ENCODE measurements at regions of chrX and their contacts with region 1.

Region 1: DNA sequence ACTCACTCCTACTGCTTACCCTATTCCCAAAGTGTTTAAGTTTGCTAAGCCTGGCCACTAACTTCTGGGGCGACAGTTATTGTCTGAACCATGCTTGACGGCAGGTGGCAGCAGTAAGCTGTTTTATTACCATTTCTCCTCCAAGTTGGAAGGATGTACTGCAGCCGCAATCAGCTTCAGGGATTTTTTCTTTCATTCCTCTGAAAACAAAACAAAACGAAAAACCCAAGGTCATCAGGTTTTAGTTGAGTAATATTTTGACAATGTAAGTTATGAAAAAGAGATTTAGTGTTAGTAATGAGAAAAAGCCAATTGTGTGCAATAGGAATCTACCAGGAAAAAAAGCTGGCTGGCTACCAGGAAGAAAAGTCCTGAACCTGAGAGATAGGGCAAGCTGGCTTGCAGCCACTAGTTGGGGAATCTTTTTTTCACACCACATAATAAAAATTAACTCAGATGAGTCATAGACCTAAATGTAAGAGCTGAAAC is 13.2 kb upstream of the RAB9B start:
- DNase-seq: peak; percentile 69
- ATAC-seq: peak; percentile 94
- H3K4me3 Mint-ChIP-seq: no peak overlapping the region
- H3K27ac Mint-ChIP-seq: no peak overlapping the region
- H3K4me1 Mint-ChIP-seq: no peaks in the 10 kb centered on the region; the same call in 1 of the 2 replicates
- H3K27me3 Mint-ChIP-seq: peaks cover 2% of the 10 kb centered on the region
- CTCF ChIP-seq: no peak

Region 2: DNA sequence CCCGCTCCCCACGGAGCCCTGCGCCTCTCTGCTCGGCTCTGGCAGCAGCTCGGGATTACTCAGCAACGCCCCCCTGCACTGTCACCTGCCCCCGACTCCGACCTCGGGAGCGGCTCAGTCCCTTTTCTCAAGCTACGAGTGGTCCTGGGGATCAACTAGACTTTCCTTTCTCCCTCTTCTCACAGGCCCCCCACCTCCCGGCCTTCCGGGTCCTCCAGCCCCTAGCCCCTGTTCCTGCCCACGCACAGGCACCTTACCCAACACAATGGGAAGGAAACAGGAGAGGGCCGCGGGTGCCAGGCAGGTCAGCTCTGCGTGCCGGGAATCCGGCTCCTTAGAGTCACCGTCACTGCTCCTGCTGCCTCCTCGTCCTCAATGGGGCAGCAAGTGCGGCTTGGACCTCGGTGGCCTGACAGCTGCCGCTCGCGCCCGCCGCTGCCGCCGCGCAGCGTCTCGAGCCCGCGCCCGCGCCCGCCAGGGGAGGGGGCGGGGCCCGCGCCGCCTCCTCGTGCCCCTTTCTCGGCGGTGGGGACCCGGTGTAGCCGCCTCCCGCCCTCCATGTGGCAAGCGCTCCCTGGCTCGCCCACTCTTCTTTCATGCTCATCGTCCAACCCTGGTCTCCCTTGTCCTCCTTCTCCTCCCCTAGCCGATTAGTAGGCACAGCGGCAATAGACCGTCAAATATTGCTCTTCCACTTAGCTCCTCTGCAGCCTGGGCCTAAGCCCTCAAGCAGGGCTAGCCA is 13.2 kb before region 1 on chrX and contains the start of gene RAB9B:
- CTCF ChIA-PET with region 1: interaction called, 20 read pairs
- POLR2A ChIA-PET with region 1: no interaction called
- DNase-seq: peak; percentile 75
- ATAC-seq: peak; percentile 96
- H3K4me3 Mint-ChIP-seq: peak within 1 kb of the TSS; percentile 76
- H3K27ac Mint-ChIP-seq: no peak within 1 kb of the TSS
- H3K4me1 Mint-ChIP-seq: peaks cover 6% of the 10 kb centered on the region
- H3K27me3 Mint-ChIP-seq: peaks cover 72% of the 10 kb centered on the region
- CTCF ChIP-seq: no peak
- total RNA-seq, gene RAB9B: 0.22 to 0.44 TPM (median 0.25 TPM) in 3 replicates

Region 3: GRCh38 chrX:103918581-103919269 is 73.5 kb after region 1 on chrX:
- CTCF ChIA-PET with region 1: interaction called, 28 read pairs
- POLR2A ChIA-PET with region 1: interaction called, 3 read pairs
- DNase-seq: peak; percentile 64
- ATAC-seq: peak; percentile 63
- H3K4me3 Mint-ChIP-seq: peak overlapping the region; percentile 84
- H3K27ac Mint-ChIP-seq: peak overlapping the region; percentile 49
- H3K4me1 Mint-ChIP-seq: peaks cover 9% of the 10 kb centered on the region
- H3K27me3 Mint-ChIP-seq: peaks cover 16% of the 10 kb centered on the region
- CTCF ChIP-seq: no peak

Region 4: DNA sequence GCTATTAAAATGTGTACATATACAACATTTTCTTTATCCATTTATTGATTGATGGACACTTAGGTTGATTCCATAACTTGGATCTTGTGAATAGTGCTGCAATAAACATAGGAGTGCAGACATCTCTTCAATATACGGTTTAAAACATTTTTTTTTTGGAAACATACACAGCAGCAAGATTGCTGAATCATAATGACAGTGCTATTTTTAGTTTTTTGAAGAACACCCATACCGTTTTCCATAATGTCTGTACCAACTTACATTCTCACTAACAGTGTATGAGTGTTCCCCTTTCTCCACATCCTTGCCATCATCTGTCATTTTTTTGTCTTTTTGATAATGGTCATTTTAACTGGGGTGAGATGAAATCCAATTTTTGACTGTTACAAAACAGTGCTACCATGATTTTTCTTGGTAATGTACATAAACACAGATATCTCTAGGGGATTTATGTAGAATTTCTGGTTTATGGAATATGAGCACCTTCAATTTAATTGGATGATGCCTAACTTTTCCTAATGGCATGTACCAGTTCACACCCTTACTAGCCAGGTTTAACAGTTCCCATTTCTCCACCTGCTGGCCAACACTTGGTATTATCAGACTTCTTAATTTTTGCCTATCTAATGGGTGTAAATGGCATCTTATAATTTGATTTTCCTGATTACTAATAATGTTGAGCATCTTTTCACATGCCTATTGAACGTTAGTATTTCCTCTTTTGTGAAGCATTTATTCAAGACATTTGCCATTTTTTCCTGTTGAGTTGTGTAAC is 96.2 kb after region 1 on chrX:
- CTCF ChIA-PET with region 1: interaction called, 12 read pairs
- POLR2A ChIA-PET with region 1: no interaction called
- DNase-seq: no peak
- ATAC-seq: no peak
- H3K4me3 Mint-ChIP-seq: no peak overlapping the region
- H3K27ac Mint-ChIP-seq: no peak overlapping the region
- H3K4me1 Mint-ChIP-seq: 0 out of 2 replicates have a peak, but pooled peaks cover 2% of the 10 kb centered on the region
- H3K27me3 Mint-ChIP-seq: peaks cover 16% of the 10 kb centered on the region
- CTCF ChIP-seq: 0 out of 2 replicates have a peak, but pooled peaks have one; percentile 25

Region 5: GRCh38 chrX:104113222-104113965 is 268.2 kb after region 1 on chrX:
- CTCF ChIA-PET with region 1: interaction called, 15 read pairs
- POLR2A ChIA-PET with region 1: no interaction called
- DNase-seq: peak; percentile 63
- ATAC-seq: peak; percentile 62
- H3K4me3 Mint-ChIP-seq: peak overlapping the region; percentile 85
- H3K27ac Mint-ChIP-seq: no peak overlapping the region
- H3K4me1 Mint-ChIP-seq: peaks cover 15% of the 10 kb centered on the region
- H3K27me3 Mint-ChIP-seq: peaks cover 9% of the 10 kb centered on the region
- CTCF ChIP-seq: no peak